Spleen (tissue), 13 donors: ENCODE measurements at regions of chr3 and their contacts with region 1.

Region 1: DNA sequence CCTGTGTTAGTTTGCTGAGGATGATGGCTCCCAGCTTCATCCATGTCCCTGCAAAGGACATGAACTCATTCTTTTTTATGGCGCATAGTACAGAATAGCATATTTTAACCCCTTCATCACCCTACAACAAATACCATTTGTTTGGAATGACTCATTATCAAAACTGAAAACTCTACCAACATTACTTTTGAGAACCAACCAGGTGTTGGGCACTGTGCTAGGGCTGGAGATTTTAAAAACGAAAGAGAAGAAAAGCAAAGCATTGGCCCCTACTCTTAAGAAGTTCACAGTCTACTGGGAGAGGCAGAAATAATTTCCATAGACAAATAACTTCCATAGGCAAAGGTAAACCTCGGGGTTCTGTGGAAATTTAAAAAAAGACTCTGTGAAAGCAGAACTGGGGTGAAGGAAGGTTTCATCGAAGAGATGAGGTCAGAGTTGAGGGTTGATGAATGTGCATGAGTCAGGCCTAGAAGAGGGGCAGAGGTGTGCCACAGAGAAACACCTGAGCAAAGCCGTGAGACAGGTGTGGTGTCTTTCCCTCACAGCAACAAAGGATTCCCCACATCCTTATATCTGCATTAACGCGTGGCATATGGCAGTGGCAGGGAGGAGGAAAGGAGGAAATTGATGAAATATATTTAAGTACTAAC is 51.0 kb downstream of the MCF2L2 start:
- DNase-seq: no peak
- H3K4me3 ChIP-seq: no peak overlapping the region
- H3K27ac ChIP-seq: no peak overlapping the region
- H3K4me1 ChIP-seq: peaks cover 0 to 55% (median 34%) of the 10 kb centered on the region in 6 donors
- H3K27me3 ChIP-seq: no peaks in the 10 kb centered on the region
- CTCF ChIP-seq: no peak
- POLR2A ChIP-seq: no peak

Region 2: GRCh38 chr3:183188895-183189462 is 188.5 kb before region 1 on chr3:
- intact Hi-C with region 1: loop called (anchors 5 kb)
- DNase-seq: no peak
- H3K4me3 ChIP-seq: no peak overlapping the region
- H3K27ac ChIP-seq: no peak overlapping the region
- H3K4me1 ChIP-seq: peaks cover 0 to 32% (median 12%) of the 10 kb centered on the region in 6 donors
- H3K27me3 ChIP-seq: peaks cover 0 to 16% (median 0%) of the 10 kb centered on the region in 7 donors
- CTCF ChIP-seq: peak in 7 of 11 experiments; percentile 5 to 41 (median 20)
- POLR2A ChIP-seq: no peak

Region 3: DNA sequence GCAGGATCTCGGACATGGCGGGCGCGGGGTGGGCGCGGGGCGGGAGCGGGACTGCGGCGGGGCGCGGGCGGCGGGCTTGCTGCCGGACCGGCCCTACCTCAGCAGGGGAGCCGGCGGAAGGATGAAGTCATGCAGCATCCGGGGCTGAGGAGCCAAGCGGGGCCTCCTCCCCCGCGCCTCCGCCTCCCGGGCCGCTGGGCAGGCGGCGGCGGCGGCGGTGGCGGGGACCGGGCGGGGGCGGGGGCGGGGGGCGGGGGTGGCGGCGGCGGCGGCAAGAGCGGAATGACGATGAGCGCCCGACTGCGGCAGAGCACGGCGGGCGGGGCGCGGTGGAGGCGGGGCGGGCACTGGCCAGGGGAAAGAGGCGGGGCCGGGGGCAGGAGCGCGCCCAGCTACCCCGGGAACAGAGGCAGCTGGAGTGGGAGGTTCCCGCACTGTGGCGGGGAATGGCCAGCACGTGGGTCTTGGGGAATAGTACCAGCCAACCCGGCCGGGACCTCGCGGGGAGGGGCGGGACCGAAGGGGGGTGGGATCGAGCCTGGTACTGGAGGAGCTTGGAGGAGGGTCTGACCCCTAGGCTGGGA is 883.9 kb after region 1 on chr3 and contains the start of gene CAMK2N2:
- intact Hi-C with region 1: no loop called
- DNase-seq: peak; percentile 85
- H3K4me3 ChIP-seq: peak within 1 kb of the TSS; percentile 34 to 75 (median 54)
- H3K27ac ChIP-seq: peak within 1 kb of the TSS in 2 of 8 donors; percentile 13 to 24
- H3K4me1 ChIP-seq: peaks cover 17 to 39% (median 32%) of the 10 kb centered on the region in 6 donors
- H3K27me3 ChIP-seq: peaks cover 3 to 82% (median 55%) of the 10 kb centered on the region in 7 donors
- CTCF ChIP-seq: no peak
- POLR2A ChIP-seq: no peak
- total RNA-seq, gene CAMK2N2: 0.35 TPM in 1 of 7 donors, not detected in the others